ENCODE measurements at regions of chr12 and their contacts with region 1.

Region 1: DNA sequence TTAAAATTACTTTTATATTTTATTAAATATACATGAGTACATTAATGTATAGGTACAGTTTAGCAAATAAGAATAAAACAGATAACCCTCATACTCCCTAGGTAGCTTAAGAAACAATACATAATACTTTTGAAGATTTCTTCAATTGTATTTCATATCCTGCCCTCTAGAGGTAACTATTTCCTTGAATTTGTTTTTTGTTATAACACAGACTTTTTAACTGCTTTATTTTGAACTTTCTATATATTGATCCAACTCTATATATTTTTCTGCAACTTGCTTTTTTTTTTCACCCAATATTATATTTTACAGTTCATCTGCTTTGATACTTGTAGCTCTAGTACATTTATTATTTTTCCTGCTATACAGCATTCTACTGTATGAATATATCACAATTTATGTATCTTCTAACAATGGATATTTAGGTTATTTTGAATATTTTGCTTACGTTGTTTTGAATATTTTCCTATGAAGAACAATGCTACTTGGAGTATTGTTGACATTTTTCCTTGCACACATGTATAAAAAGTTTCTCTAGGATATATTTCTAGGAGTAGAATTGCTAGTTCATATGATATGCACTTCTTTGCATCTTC is 72.8 kb upstream of the ABCD2 start:
- DNase-seq: no peak
- ATAC-seq: no peak
- H3K4me3 ChIP-seq: no peak overlapping the region
- H3K4me3 Mint-ChIP-seq: no peak overlapping the region
- H3K27ac ChIP-seq: no peak overlapping the region
- H3K27ac Mint-ChIP-seq: no peak overlapping the region
- H3K4me1 ChIP-seq: no peaks in the 10 kb centered on the region
- H3K4me1 Mint-ChIP-seq: no peaks in the 10 kb centered on the region
- H3K27me3 ChIP-seq: peaks cover 0 to 4% (median 0%) of the 10 kb centered on the region in 4 experiments
- H3K27me3 Mint-ChIP-seq: peaks cover 6% of the 10 kb centered on the region
- CTCF ChIP-seq: peak; percentile 66

Region 2: GRCh38 chr12:39319187-39319586 is 373.2 kb before region 1 on chr12:
- CTCF ChIA-PET with region 1: interaction called, 13 read pairs
- POLR2A ChIA-PET with region 1: no interaction called
- intact Hi-C with region 1: no loop called
- DNase-seq: no peak
- ATAC-seq: no peak
- H3K4me3 ChIP-seq: no peak overlapping the region
- H3K4me3 Mint-ChIP-seq: no peak overlapping the region
- H3K27ac ChIP-seq: no peak overlapping the region
- H3K27ac Mint-ChIP-seq: no peak overlapping the region
- H3K4me1 ChIP-seq: no peaks in the 10 kb centered on the region
- H3K4me1 Mint-ChIP-seq: no peaks in the 10 kb centered on the region
- H3K27me3 ChIP-seq: no peaks in the 10 kb centered on the region
- H3K27me3 Mint-ChIP-seq: no peaks in the 10 kb centered on the region
- CTCF ChIP-seq: no peak

Region 3: GRCh38 chr12:39587225-39587624 is 105.1 kb before region 1 on chr12:
- CTCF ChIA-PET with region 1: interaction called, 10 read pairs
- POLR2A ChIA-PET with region 1: no interaction called
- intact Hi-C with region 1: loop called (anchors 1 kb)
- DNase-seq: peak; percentile 41
- ATAC-seq: no peak
- H3K4me3 ChIP-seq: no peak overlapping the region
- H3K4me3 Mint-ChIP-seq: no peak overlapping the region
- H3K27ac ChIP-seq: no peak overlapping the region
- H3K27ac Mint-ChIP-seq: no peak overlapping the region
- H3K4me1 ChIP-seq: no peaks in the 10 kb centered on the region
- H3K4me1 Mint-ChIP-seq: peaks cover 2% of the 10 kb centered on the region
- H3K27me3 ChIP-seq: no peaks in the 10 kb centered on the region
- H3K27me3 Mint-ChIP-seq: no peaks in the 10 kb centered on the region
- CTCF ChIP-seq: peak; percentile 58

Measured in B cell (primary cell).